ENCODE measurements at regions of chr13 and their contacts with region 1.

Region 1: GRCh38 chr13:75482070-75482819 is at the start of gene TBC1D4:
- DNase-seq: peak; percentile 68
- H3K4me3 Mint-ChIP-seq: peak within 1 kb of the TSS; percentile 94
- H3K27ac Mint-ChIP-seq: no peak within 1 kb of the TSS
- H3K4me1 Mint-ChIP-seq: peaks cover 11% of the 10 kb centered on the region
- H3K27me3 Mint-ChIP-seq: peaks cover 53% of the 10 kb centered on the region
- total RNA-seq, gene TBC1D4: 13.4 to 19.7 TPM

Region 2: DNA sequence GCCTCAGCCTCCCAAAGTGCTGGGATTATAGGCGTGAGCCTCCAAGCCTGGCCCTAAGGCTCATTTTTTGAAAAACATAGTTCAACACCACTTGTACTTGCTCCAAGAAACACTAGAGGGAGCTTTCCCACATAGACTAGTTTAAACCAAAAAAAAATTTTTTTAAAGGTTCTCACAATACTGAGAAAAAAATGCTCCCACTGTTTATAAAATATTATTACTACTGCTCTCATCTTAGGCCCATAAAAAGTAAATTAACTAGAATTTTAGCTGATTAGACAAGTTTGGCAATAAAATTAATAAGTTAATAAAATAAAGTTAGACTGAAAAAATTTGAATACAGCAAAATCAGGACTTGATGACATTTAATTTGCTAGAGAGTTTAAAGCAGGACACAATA is 109.7 kb before region 1 on chr13:
- CTCF ChIA-PET with region 1: interaction called, 7 read pairs
- intact Hi-C with region 1: loop called (anchors 1 kb)
- DNase-seq: no peak
- H3K4me3 Mint-ChIP-seq: no peak overlapping the region
- H3K27ac Mint-ChIP-seq: no peak overlapping the region
- H3K4me1 Mint-ChIP-seq: peaks cover 5% of the 10 kb centered on the region
- H3K27me3 Mint-ChIP-seq: no peaks in the 10 kb centered on the region

Region 3: GRCh38 chr13:75384879-75385707 is 97.2 kb before region 1 on chr13:
- CTCF ChIA-PET with region 1: no interaction called
- intact Hi-C with region 1: loop called (anchors 1 kb)
- DNase-seq: no peak
- H3K4me3 Mint-ChIP-seq: no peak overlapping the region
- H3K27ac Mint-ChIP-seq: no peak overlapping the region
- H3K4me1 Mint-ChIP-seq: peaks cover 13% of the 10 kb centered on the region
- H3K27me3 Mint-ChIP-seq: no peaks in the 10 kb centered on the region

Region 4: GRCh38 chr13:75537401-75538365 is 55.4 kb after region 1 on chr13 and contains the start of gene COMMD6:
- CTCF ChIA-PET with region 1: interaction called, 3 read pairs
- intact Hi-C with region 1: loop called (anchors 1 kb)
- DNase-seq: peak; percentile 70
- H3K4me3 Mint-ChIP-seq: peak within 1 kb of the TSS; percentile 93
- H3K27ac Mint-ChIP-seq: peak within 1 kb of the TSS; percentile 81
- H3K4me1 Mint-ChIP-seq: peaks cover 25% of the 10 kb centered on the region
- H3K27me3 Mint-ChIP-seq: no peaks in the 10 kb centered on the region
- total RNA-seq, gene COMMD6: 95.4 to 105 TPM

Region 5: GRCh38 chr13:75635828-75636435 is 153.7 kb after region 1 on chr13 and contains the start of gene LMO7:
- CTCF ChIA-PET with region 1: no interaction called
- intact Hi-C with region 1: loop called (anchors 1 kb)
- DNase-seq: peak; percentile 55
- H3K4me3 Mint-ChIP-seq: peak within 1 kb of the TSS; percentile 75
- H3K27ac Mint-ChIP-seq: no peak within 1 kb of the TSS
- H3K4me1 Mint-ChIP-seq: peaks cover 6% of the 10 kb centered on the region
- H3K27me3 Mint-ChIP-seq: peaks cover 12% of the 10 kb centered on the region
- total RNA-seq, gene LMO7: 10.5 to 12.0 TPM

Measured in activated naive CD4-positive, alpha-beta T cell treated with anti-CD3 and anti-CD28 coated beads for 36 hours (primary cell).